Panc1 (cell line): ENCODE measurements at regions of chr4 and their contacts with region 1.

Region 1: DNA sequence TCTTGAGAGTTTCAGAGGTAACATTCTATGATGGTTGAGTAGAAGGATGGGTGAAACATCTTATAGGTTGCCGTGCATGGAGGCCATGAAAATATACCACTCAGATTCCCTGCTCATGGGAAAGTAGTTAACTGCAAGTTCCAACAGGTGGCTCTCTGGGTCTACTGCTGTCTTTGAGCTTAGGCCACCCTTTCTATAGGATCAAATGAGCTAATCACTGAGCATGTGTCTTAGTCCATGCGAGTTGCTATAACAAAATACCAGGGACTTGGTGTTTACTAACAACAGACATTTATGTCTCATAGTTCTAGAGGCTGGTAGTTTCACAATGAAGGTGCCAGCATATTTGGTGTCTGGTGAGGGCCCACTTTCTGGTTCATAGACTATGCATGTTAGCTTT is 144.8 kb upstream of the UNC5C start:
- DNase-seq: no peak
- ATAC-seq: no peak
- H3K4me3 ChIP-seq: no peak overlapping the region
- H3K27ac ChIP-seq: no peak overlapping the region
- H3K4me1 ChIP-seq: no peaks in the 10 kb centered on the region
- H3K27me3 ChIP-seq: no peaks in the 10 kb centered on the region
- CTCF ChIP-seq: peak; percentile 34; the same call in 1 of the 2 replicates

Region 2: GRCh38 chr4:95779447-95779846 is 85.9 kb after region 1 on chr4:
- CTCF ChIA-PET with region 1: no interaction called
- POLR2A ChIA-PET with region 1: interaction called, 10 read pairs
- in situ Hi-C with region 1: no loop called
- intact Hi-C with region 1: no loop called
- DNase-seq: no peak
- ATAC-seq: no peak
- H3K4me3 ChIP-seq: no peak overlapping the region
- H3K27ac ChIP-seq: no peak overlapping the region
- H3K4me1 ChIP-seq: no peaks in the 10 kb centered on the region
- H3K27me3 ChIP-seq: no peaks in the 10 kb centered on the region
- CTCF ChIP-seq: no peak

Region 3: DNA sequence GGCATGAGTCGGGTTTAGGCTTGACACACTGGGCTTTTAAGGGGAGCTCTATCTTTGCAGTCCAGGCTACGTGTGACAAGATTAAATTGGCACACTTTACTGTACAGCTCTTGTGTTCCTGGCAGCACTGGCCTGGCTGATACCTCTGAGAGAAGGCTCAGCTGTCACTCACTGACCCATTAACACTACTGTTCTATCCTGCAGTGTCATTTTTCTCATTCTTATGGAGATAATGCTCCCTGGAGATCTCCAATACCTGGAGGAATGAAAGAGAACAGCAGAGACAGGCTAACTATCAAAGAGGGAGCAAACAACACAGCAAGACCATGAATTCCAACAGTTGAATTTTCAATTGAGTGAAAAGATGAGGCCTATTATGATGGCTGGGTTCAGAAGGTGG is 144.6 kb after region 1 on chr4:
- CTCF ChIA-PET with region 1: no interaction called
- POLR2A ChIA-PET with region 1: no interaction called
- in situ Hi-C with region 1: no loop called
- intact Hi-C with region 1: no loop called
- DNase-seq: no peak
- ATAC-seq: no peak
- H3K4me3 ChIP-seq: no peak overlapping the region
- H3K27ac ChIP-seq: no peak overlapping the region
- H3K4me1 ChIP-seq: no peaks in the 10 kb centered on the region
- H3K27me3 ChIP-seq: no peaks in the 10 kb centered on the region
- CTCF ChIP-seq: no peak